HEK293T (cell line): ENCODE measurements at regions of chr9 and their contacts with region 1.

Region 1: DNA sequence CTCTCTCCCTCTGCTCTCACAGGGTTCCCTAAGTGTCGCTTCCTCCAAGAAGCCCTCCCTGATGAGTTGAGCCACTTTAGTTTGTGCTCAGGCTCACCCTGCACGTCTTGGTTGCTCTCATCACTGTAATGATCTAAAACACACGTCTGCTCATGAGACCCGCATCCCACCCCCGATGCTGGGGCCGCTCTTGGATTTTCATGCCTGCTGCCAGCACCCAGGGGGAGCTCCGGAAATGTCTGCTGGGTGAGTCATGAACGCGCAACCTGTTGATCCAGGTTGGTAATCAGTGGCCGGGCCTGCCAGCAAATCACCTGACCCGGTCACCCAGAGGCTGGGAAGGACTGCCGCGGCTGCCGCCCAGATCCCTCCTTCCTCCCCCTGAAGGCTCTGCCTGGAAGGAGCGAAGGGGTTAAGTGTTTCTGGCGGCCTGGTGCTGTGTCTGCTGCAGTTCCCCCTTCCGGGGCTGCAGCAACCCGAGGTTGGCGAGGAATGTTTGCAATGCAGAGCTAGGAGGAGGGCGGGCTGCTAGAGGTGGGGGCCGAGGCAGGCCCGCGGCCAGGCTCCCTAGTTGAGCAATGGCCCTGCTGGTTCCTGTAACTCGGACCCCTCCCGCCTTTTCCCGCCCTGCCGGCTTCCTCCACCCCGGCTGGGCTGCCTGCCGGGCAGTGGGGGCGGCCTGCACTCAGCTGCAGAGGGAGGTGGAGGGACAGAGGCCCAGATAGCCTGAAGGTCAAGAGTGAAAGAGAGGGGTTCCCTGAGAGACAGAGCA is 156.1 kb upstream of the IER5L start:
- DNase-seq: peak; percentile 42

Region 2: GRCh38 chr9:128911529-128912035 is 422.6 kb before region 1 on chr9:
- CTCF ChIA-PET with region 1: no interaction called
- POLR2A ChIA-PET with region 1: no interaction called
- DNase-seq: no peak

Region 3: GRCh38 chr9:129320575-129321263 is 13.4 kb before region 1 on chr9:
- CTCF ChIA-PET with region 1: no interaction called
- POLR2A ChIA-PET with region 1: interaction called, 14 read pairs
- DNase-seq: peak; percentile 64

Region 4: DNA sequence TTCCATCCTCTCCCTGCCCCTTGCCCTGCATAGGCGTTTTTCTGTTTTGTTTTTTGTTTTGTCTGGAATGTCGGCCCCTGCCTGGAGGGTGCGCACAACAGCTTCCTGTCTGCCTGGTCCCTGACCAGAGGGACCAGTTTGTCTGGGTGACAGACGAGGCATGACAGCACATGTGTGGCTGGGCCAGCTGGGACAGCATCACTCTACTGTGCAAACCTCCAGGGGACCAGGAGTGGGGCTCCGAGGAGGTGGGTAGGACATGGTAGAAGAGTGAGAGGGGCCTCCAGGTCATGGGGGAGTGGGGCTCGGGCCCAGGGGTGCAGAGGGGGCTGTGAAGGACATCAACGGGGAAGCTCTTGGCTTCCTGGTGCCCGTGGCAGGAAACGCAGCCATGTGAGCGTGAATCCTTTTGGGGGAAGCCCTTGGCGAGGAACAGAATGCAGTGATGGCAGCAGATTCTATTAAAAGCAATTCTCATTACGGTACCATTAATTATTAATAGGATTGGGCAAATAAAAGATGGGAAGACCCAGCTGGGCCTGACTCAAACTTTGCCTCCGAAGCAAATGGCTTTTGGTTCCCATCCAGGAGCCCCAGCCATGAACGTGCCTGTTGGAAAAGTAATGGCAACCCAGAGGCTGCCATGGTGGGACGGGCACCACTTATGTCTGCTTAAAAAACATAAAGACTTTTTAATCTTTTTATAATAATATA is 28.3 kb after region 1 on chr9:
- CTCF ChIA-PET with region 1: no interaction called
- POLR2A ChIA-PET with region 1: no interaction called
- DNase-seq: no peak